Lower lobe of right lung (tissue), 2 donors: ENCODE measurements at regions of chr15 and their contacts with region 1.

Region 1: GRCh38 chr15:66603301-66604179 is 37.7 kb upstream of the LCTL start:
- DNase-seq: peak; percentile 79
- ATAC-seq: peak; percentile 87 to 90
- H3K4me3 ChIP-seq: no peak overlapping the region
- H3K27ac ChIP-seq: no peak overlapping the region
- H3K4me1 ChIP-seq: no peaks in the 10 kb centered on the region
- H3K27me3 ChIP-seq: no peaks in the 10 kb centered on the region
- CTCF ChIP-seq: peak; percentile 86

Region 2: DNA sequence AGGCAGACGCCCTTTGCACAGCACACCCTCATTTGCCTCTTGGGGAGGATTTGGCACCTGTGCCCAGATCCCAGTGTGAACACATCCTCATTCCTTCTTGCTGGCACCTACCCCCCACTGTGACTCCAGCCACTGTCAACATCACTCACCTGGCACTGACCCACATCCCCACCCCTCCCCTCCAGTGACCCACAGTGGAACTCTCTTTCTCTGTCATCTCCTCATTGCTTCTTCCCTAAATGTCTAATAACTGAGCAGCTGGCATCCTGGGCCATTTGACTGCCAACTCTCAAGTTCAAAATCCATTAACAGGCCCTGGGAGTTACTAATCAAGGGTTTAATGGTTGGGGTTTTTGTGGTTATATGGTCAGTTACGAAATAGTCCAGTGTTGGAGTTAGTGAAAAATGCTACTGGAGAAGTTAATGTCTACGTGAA is 120.4 kb before region 1 on chr15:
- intact Hi-C with region 1: no loop called
- DNase-seq: peak; percentile 64
- ATAC-seq: peak; percentile 70 to 81
- H3K4me3 ChIP-seq: no peak overlapping the region
- H3K27ac ChIP-seq: peak overlapping the region; percentile 24
- H3K4me1 ChIP-seq: no peaks in the 10 kb centered on the region
- H3K27me3 ChIP-seq: no peaks in the 10 kb centered on the region
- CTCF ChIP-seq: no peak

Region 3: GRCh38 chr15:66685638-66686150 is 82.2 kb after region 1 on chr15:
- intact Hi-C with region 1: no loop called
- DNase-seq: no peak
- ATAC-seq: no peak
- H3K4me3 ChIP-seq: no peak overlapping the region
- H3K27ac ChIP-seq: no peak overlapping the region
- H3K4me1 ChIP-seq: no peaks in the 10 kb centered on the region
- H3K27me3 ChIP-seq: no peaks in the 10 kb centered on the region
- CTCF ChIP-seq: no peak

Region 4: DNA sequence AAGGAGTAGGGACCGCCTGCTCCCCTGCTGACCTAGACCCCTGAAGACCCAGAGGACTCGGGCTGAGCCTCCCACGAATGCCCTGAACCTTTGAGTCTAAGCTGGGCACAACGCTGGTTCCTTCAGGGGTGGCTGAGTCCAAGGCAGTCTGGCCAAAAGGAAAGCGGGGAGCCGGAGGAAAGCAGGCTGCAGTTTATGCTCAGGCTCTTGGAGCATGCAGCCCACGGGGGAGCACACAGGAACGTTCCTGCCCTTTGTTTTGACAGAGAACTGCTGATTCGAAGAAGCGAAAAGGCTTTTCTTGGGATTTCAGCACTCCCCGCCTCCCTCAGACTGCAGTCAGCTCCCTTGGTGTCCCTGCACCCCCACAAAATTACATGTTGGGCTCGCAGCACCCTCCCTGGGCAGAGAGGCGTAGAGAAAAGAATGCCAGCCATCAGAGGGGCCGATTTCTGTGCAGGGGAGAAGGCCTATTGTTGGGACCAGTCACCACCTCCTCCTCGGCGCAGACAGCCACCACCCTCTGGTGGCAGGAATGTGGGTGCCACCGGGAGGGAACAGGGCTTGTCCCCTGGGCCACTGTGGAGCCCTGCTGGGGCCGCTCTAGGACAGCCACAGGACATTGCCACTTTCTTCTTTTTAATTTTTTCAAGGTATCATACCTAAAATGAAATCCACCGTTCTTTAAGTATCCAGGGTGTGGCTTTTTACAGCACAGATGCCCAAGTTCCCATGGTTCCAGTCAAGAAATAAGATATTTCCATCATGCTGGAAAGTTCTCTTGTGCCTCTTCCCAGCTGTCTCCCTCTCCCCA is 170.7 kb after region 1 on chr15:
- intact Hi-C with region 1: loop called (anchors 10 kb)
- DNase-seq: peak; percentile 88
- ATAC-seq: peak; percentile 94 to 96
- H3K4me3 ChIP-seq: no peak overlapping the region
- H3K27ac ChIP-seq: peak overlapping the region; percentile 44
- H3K4me1 ChIP-seq: peaks cover 55% of the 10 kb centered on the region
- H3K27me3 ChIP-seq: no peaks in the 10 kb centered on the region
- CTCF ChIP-seq: peak; percentile 98

Region 5: GRCh38 chr15:66789029-66790025 is 185.8 kb after region 1 on chr15:
- intact Hi-C with region 1: no loop called
- DNase-seq: no peak
- ATAC-seq: peak; percentile 70 to 80
- H3K4me3 ChIP-seq: no peak overlapping the region
- H3K27ac ChIP-seq: no peak overlapping the region
- H3K4me1 ChIP-seq: peaks cover 5% of the 10 kb centered on the region
- H3K27me3 ChIP-seq: no peaks in the 10 kb centered on the region
- CTCF ChIP-seq: peak; percentile 55

Region 6: GRCh38 chr15:66851226-66852071 is 247.9 kb after region 1 on chr15:
- intact Hi-C with region 1: loop called (anchors 5 kb)
- DNase-seq: peak; percentile 92
- ATAC-seq: peak; percentile 93 to 95
- H3K4me3 ChIP-seq: peak overlapping the region; percentile 0
- H3K27ac ChIP-seq: no peak overlapping the region
- H3K4me1 ChIP-seq: peaks cover 17% of the 10 kb centered on the region
- H3K27me3 ChIP-seq: no peaks in the 10 kb centered on the region
- CTCF ChIP-seq: peak; percentile 98